Heart left ventricle (tissue), 16 donors: ENCODE measurements at regions of chr12 and their contacts with region 1.

Region 1: DNA sequence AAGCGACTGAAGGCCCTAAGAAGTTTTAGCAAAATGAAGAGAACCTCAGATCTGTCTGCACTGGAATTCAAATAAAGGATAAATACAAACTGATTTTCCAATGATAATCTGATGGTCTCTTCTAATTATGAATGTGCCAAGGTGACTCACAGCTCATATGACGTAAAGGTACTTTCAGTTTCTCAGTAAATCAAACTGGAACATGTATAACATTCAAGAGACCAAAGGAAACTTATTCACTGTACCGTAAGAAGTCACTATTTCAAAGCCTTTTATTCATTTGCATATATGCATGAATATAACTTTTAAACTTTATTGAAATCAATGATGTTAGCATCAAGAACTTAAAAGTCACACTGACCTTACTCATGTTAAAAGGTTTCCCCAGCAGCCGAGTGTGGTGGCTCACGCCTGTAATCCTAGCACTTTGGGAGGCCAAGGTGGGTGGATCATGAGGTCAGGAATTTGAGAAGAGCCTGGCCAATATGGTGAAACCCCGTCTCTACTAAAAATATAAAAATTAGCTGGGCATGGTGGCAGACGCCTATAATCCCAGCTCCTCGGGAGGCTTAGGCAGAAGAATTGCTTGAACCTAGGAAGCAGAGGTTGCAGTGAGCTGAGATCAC is 52.2 kb downstream of the ATXN2 start:
- DNase-seq: no peak
- ATAC-seq: no peak
- H3K4me3 ChIP-seq: no peak overlapping the region
- H3K27ac ChIP-seq: peak overlapping the region in 1 of 12 donors; percentile 27
- H3K4me1 ChIP-seq: peaks cover 0 to 8% (median 0%) of the 10 kb centered on the region in 12 donors
- H3K27me3 ChIP-seq: no peaks in the 10 kb centered on the region
- CTCF ChIP-seq: no peak
- POLR2A ChIP-seq: no peak

Region 2: GRCh38 chr12:111653596-111653995 is 106.7 kb after region 1 on chr12:
- intact Hi-C with region 1: loop called in 1 of 10 experiments (anchors 10 kb)
- DNase-seq: no peak
- ATAC-seq: no peak
- H3K4me3 ChIP-seq: no peak overlapping the region
- H3K27ac ChIP-seq: no peak overlapping the region
- H3K4me1 ChIP-seq: no peaks in the 10 kb centered on the region
- H3K27me3 ChIP-seq: no peaks in the 10 kb centered on the region
- CTCF ChIP-seq: no peak
- POLR2A ChIP-seq: no peak

Region 3: GRCh38 chr12:111766608-111767361 is 219.9 kb after region 1 on chr12 and contains the start of gene ALDH2:
- intact Hi-C with region 1: no loop called
- DNase-seq: peak; percentile 70 to 89 (median 84)
- ATAC-seq: peak; percentile 89 to 99 (median 97)
- H3K4me3 ChIP-seq: peak within 1 kb of the TSS; percentile 70 to 93 (median 86)
- H3K27ac ChIP-seq: peak within 1 kb of the TSS; percentile 53 to 91 (median 82)
- H3K4me1 ChIP-seq: peaks cover 0 to 34% (median 14%) of the 10 kb centered on the region in 12 donors
- H3K27me3 ChIP-seq: no peaks in the 10 kb centered on the region
- CTCF ChIP-seq: peak in 6 of 12 donors; percentile 6 to 37 (median 14)
- POLR2A ChIP-seq: peak in 1 of 2 donors; percentile 81
- total RNA-seq, gene ALDH2: 176 to 303 (median 260) TPM